Aorta (tissue), 5 donors: ENCODE measurements at regions of chr1 and their contacts with region 1.

Region 1: GRCh38 chr1:31745096-31745945 is 18.8 kb downstream of the ADGRB2 start:
- DNase-seq: peak; percentile 68 to 90
- ATAC-seq: peak; percentile 62
- H3K4me3 ChIP-seq: no peak overlapping the region
- H3K27ac ChIP-seq: no peak overlapping the region
- H3K4me1 ChIP-seq: no peaks in the 10 kb centered on the region
- H3K27me3 ChIP-seq: no peaks in the 10 kb centered on the region

Region 2: GRCh38 chr1:31663622-31664452 is 81.5 kb before region 1 on chr1:
- intact Hi-C with region 1: loop called (anchors 2 to 5 kb)
- DNase-seq: no peak
- ATAC-seq: peak; percentile 78
- H3K4me3 ChIP-seq: no peak overlapping the region
- H3K27ac ChIP-seq: no peak overlapping the region
- H3K4me1 ChIP-seq: no peaks in the 10 kb centered on the region
- H3K27me3 ChIP-seq: no peaks in the 10 kb centered on the region

Region 3: GRCh38 chr1:31669786-31670592 is 75.3 kb before region 1 on chr1:
- intact Hi-C with region 1: loop called in 1 of 2 experiments (anchors 5 kb)
- DNase-seq: peak; percentile 86 to 95
- ATAC-seq: peak; percentile 56
- H3K4me3 ChIP-seq: no peak overlapping the region
- H3K27ac ChIP-seq: peak overlapping the region in 1 of 2 donors; percentile 90
- H3K4me1 ChIP-seq: peaks cover 0 to 2% of the 10 kb centered on the region in 2 donors
- H3K27me3 ChIP-seq: no peaks in the 10 kb centered on the region

Region 4: DNA sequence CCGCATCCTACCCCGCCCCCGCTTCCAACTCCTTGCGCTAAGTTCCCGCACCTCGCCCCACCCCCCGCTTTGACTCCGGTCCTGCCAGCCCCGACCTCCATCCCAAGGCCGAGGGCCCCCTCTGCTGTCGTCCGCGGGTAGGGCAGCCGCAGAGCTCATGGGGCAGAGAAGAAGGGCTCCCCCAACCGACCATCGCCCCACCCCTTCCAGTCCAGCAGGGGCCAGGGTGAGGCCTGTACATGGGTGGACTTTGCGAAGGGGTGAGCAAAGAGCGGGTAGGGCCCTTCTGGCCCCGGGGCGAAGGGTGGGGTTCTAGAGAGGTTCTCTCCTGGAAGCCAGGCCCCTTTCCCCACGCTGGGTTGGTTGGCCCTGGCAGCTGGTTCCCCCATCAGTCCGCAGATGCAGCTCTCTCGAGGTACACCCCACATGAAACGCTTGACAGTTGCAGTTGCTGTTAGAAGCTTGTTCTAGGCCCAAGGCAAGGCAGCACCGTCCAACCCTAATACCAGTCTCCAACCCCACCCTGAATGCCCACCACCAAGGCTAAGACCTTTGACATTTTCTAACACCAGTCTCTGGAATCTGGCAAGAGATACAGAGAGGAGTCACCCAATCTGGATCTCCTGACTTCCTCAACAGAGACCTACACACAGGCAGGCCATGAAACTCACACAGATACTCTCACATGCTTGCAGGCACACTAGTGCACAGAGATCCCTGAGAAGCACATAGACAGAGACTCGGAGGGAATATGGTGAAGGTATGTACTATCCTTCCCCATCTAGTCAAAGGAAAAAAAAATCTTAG is 44.1 kb after region 1 on chr1:
- intact Hi-C with region 1: loop called in 1 of 2 experiments (anchors 5 kb)
- DNase-seq: peak; percentile 97 to 99
- ATAC-seq: peak; percentile 95
- H3K4me3 ChIP-seq: peak overlapping the region; percentile 5 to 49
- H3K27ac ChIP-seq: no peak overlapping the region
- H3K4me1 ChIP-seq: no peaks in the 10 kb centered on the region
- H3K27me3 ChIP-seq: no peaks in the 10 kb centered on the region